IMR-90 (cell line): ENCODE measurements at regions of chr2 and their contacts with region 1.

Region 1: DNA sequence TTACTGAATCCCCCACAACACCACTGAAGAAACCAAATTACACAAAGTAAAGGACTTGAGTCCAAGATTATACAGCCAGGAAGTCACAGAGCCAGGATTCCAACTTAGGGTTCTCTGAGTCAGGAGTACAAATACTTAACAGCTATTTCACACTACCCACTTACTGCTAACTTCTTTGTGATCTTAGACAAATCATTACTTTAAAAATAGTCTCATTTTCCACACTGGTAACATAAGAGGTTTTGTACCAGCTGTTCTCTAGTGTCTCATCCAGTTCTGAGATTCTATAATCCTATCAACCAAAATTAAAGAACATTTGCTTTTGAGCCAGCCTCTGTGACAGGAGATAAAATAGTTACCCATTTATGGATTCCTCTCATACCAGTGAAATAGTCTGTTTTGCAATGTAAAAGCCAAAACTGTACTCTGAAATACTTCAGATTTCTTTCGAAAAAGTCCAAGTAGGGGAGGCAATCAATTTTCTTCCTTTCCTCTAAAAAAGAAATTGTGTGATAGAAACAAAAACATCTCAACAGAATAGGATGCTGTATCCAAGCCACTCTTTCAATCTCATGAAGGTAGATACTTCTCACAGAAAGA is 157.6 kb downstream of the LRATD1 start:
- DNase-seq: no peak
- ATAC-seq: peak; percentile 21; the same call in 1 of the 2 replicates
- H3K4me3 ChIP-seq: no peak overlapping the region
- H3K27ac ChIP-seq: no peak overlapping the region
- H3K4me1 ChIP-seq: no peaks in the 10 kb centered on the region
- H3K27me3 ChIP-seq: no peaks in the 10 kb centered on the region
- CTCF ChIP-seq: no peak
- POLR2A ChIP-seq: no peak
- RAD21 ChIP-seq: no peak

Region 2: DNA sequence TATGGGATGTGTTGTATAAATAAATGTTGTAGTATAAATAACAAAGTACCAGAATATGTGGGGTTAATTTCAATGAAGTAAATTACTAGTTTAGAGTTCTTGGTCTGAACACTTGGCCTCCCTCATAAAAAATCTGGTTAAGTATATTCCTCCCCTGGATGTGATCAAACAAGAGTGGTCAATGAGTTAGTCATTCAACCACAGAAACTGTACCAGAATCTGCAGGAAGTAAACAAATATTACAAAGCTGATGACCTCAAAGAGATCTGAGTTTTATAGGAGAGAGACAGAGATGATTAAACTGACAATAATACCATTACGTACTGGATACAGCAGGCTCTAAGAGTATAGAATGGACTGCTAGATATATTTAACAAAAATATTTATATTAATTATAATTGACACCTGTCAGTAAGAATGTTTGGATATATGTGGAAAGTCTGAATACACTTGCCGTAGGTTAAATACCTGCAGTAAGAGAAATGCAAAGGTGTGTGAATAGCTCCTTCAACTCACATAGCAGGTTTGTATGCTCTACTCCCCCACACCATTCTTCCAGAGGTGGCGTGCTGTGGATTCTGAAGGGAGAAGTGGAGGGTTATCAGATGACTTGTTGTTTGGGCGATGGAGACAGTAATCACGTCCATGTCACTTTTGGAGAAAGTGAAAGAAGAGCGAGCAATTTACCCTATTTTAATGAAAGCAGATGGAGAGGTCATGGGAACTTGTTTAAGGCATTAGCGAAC is 265.9 kb before region 1 on chr2:
- CTCF ChIA-PET with region 1: no interaction called
- POLR2A ChIA-PET with region 1: no interaction called
- dilution Hi-C with region 1: no loop called
- in situ Hi-C with region 1: no loop called
- intact Hi-C with region 1: no loop called
- DNase-seq: peak; percentile 89
- ATAC-seq: peak; percentile 91
- H3K4me3 ChIP-seq: peak overlapping the region; percentile 5; the same call in 1 of the 2 replicates
- H3K27ac ChIP-seq: no peak overlapping the region
- H3K4me1 ChIP-seq: peaks cover 8% of the 10 kb centered on the region
- H3K27me3 ChIP-seq: no peaks in the 10 kb centered on the region
- CTCF ChIP-seq: no peak
- POLR2A ChIP-seq: no peak
- RAD21 ChIP-seq: no peak

Region 3: GRCh38 chr2:14673351-14673875 is 116.7 kb before region 1 on chr2:
- CTCF ChIA-PET with region 1: no interaction called
- POLR2A ChIA-PET with region 1: interaction called, 13 read pairs
- dilution Hi-C with region 1: no loop called
- in situ Hi-C with region 1: no loop called
- intact Hi-C with region 1: no loop called
- DNase-seq: no peak
- ATAC-seq: no peak
- H3K4me3 ChIP-seq: no peak overlapping the region
- H3K27ac ChIP-seq: no peak overlapping the region
- H3K4me1 ChIP-seq: no peaks in the 10 kb centered on the region
- H3K27me3 ChIP-seq: no peaks in the 10 kb centered on the region
- CTCF ChIP-seq: no peak
- POLR2A ChIP-seq: no peak
- RAD21 ChIP-seq: no peak

Region 4: GRCh38 chr2:14756976-14757657 is 33.0 kb before region 1 on chr2:
- CTCF ChIA-PET with region 1: no interaction called
- POLR2A ChIA-PET with region 1: no interaction called
- dilution Hi-C with region 1: no loop called
- in situ Hi-C with region 1: no loop called
- intact Hi-C with region 1: loop called (anchors 2 kb)
- DNase-seq: peak; percentile 85
- ATAC-seq: peak; percentile 82
- H3K4me3 ChIP-seq: no peak overlapping the region
- H3K27ac ChIP-seq: no peak overlapping the region
- H3K4me1 ChIP-seq: no peaks in the 10 kb centered on the region
- H3K27me3 ChIP-seq: no peaks in the 10 kb centered on the region
- CTCF ChIP-seq: no peak
- POLR2A ChIP-seq: no peak
- RAD21 ChIP-seq: no peak

Region 5: GRCh38 chr2:14941151-14941631 is 151.1 kb after region 1 on chr2:
- CTCF ChIA-PET with region 1: no interaction called
- POLR2A ChIA-PET with region 1: interaction called, 12 read pairs
- dilution Hi-C with region 1: no loop called
- in situ Hi-C with region 1: no loop called
- intact Hi-C with region 1: no loop called
- DNase-seq: peak; percentile 11
- ATAC-seq: peak; percentile 27; the same call in 1 of the 2 replicates
- H3K4me3 ChIP-seq: no peak overlapping the region
- H3K27ac ChIP-seq: no peak overlapping the region
- H3K4me1 ChIP-seq: no peaks in the 10 kb centered on the region
- H3K27me3 ChIP-seq: no peaks in the 10 kb centered on the region
- CTCF ChIP-seq: no peak
- POLR2A ChIP-seq: no peak
- RAD21 ChIP-seq: no peak